ENCODE measurements at regions of chr2 and their contacts with region 1.

Region 1: DNA sequence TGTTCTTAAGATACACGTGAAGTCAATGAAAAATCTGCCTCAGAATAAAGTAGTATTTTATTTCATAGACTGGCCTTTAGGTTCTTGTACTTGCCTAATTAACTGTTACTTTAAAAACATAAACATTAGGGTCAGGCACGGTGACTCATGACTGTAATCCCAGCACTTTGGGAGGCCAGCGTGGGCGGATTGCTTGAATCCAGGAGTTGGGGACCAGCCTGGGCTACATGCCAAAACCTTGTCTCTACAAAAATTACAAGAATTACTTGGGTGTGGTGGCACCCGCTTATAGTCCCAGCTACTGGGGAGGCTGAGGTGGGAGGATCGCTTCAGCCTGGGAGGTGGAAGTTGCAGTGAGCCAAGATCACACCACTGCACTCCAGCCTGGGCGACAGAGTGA is 16.0 kb upstream of the SNORC start:
- DNase-seq: peak in 1 of 5 donors; percentile 69
- H3K4me3 ChIP-seq: no peak overlapping the region
- H3K27ac ChIP-seq: no peak overlapping the region
- H3K4me1 ChIP-seq: peaks cover 0 to 2% (median 0%) of the 10 kb centered on the region in 3 donors
- H3K27me3 ChIP-seq: no peaks in the 10 kb centered on the region
- CTCF ChIP-seq: no peak

Region 2: GRCh38 chr2:233251306-233252116 is 397.4 kb after region 1 on chr2 and contains the start of gene ATG16L1:
- intact Hi-C with region 1: loop called (anchors 10 kb)
- DNase-seq: peak; percentile 97 to 99 (median 98)
- H3K4me3 ChIP-seq: peak within 1 kb of the TSS; percentile 87 to 95 (median 91)
- H3K27ac ChIP-seq: peak within 1 kb of the TSS; percentile 51 to 81
- H3K4me1 ChIP-seq: peaks cover 2 to 5% (median 5%) of the 10 kb centered on the region in 3 donors
- H3K27me3 ChIP-seq: no peaks in the 10 kb centered on the region
- CTCF ChIP-seq: peak; percentile 93
- total RNA-seq, gene ATG16L1: 30.8 TPM

Measured in kidney (tissue), 22 donors.